ENCODE measurements at regions of chr13 and their contacts with region 1.

Region 1: GRCh38 chr13:110306960-110307746 is at the starts of genes COL4A1 and COL4A2:
- DNase-seq: no peak
- H3K4me3 ChIP-seq: peak within 1 kb of the TSS; percentile 93 to 97 (median 94)
- H3K27ac ChIP-seq: peak within 1 kb of the TSS; percentile 99
- H3K4me1 ChIP-seq: peaks cover 50 to 68% (median 63%) of the 10 kb centered on the region in 4 donors
- H3K27me3 ChIP-seq: peaks cover 0 to 5% (median 2%) of the 10 kb centered on the region in 4 donors
- CTCF ChIP-seq: no peak
- EP300 ChIP-seq: no peak
- POLR2A ChIP-seq: peak; percentile 86
- total RNA-seq, gene COL4A1: 328 to 578 (median 405) TPM
- total RNA-seq, gene COL4A2: 419 to 931 (median 555) TPM

Region 2: GRCh38 chr13:110232756-110233155 is 74.4 kb before region 1 on chr13:
- intact Hi-C with region 1: no loop called
- DNase-seq: peak; percentile 90
- H3K4me3 ChIP-seq: peak overlapping the region; percentile 13 to 35 (median 22)
- H3K27ac ChIP-seq: peak overlapping the region; percentile 61 to 77 (median 68)
- H3K4me1 ChIP-seq: peaks cover 62 to 86% (median 78%) of the 10 kb centered on the region in 4 donors
- H3K27me3 ChIP-seq: no peaks in the 10 kb centered on the region
- CTCF ChIP-seq: peak in 1 of 3 experiments; percentile 3
- EP300 ChIP-seq: no peak
- POLR2A ChIP-seq: no peak

Region 3: DNA sequence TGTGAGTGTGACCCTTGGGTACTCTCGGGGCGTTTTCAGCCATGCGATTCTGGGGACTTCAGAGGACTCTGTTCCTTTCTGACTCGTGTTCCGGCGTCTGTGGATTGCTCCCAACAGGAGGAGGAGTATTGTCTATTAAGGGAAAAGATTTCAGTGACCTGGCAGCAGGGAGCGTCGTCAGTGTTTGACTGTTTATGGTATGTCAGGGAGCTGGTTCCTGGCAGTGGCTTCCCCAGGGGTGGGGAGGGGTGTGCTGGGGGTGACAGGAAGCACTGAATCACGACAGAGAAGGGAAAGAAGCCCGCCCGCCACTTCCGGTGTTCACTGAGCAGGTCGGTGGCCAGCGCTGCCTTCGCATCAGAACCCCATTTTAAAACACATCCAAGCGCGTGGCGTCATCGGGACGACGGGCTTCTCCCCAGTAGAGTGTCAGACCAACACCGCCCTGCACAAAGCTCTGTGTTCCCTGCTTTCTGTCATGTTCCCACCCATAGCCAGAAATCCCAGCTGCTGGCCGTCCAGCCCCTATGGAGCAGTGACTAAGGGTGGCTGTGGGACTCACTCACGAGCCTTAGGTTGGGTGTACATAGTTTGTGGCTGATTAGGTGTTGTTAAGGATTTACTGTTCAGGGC is 33.8 kb after region 1 on chr13:
- intact Hi-C with region 1: loop called (anchors 5 kb)
- DNase-seq: peak; percentile 98
- H3K4me3 ChIP-seq: peak overlapping the region; percentile 30 to 40 (median 36)
- H3K27ac ChIP-seq: peak overlapping the region; percentile 91 to 98 (median 92)
- H3K4me1 ChIP-seq: peaks cover 70 to 100% (median 96%) of the 10 kb centered on the region in 4 donors
- H3K27me3 ChIP-seq: no peaks in the 10 kb centered on the region
- CTCF ChIP-seq: no peak
- EP300 ChIP-seq: peak; percentile 93
- POLR2A ChIP-seq: no peak

Region 4: GRCh38 chr13:110382229-110382628 is 75.1 kb after region 1 on chr13:
- intact Hi-C with region 1: no loop called
- DNase-seq: no peak
- H3K4me3 ChIP-seq: no peak overlapping the region
- H3K27ac ChIP-seq: peak overlapping the region; percentile 74 to 91 (median 76)
- H3K4me1 ChIP-seq: peaks cover 50 to 84% (median 70%) of the 10 kb centered on the region in 4 donors
- H3K27me3 ChIP-seq: no peaks in the 10 kb centered on the region
- CTCF ChIP-seq: no peak
- EP300 ChIP-seq: no peak
- POLR2A ChIP-seq: no peak

Region 5: GRCh38 chr13:110409581-110409992 is 102.4 kb after region 1 on chr13:
- intact Hi-C with region 1: no loop called
- DNase-seq: no peak
- H3K4me3 ChIP-seq: no peak overlapping the region
- H3K27ac ChIP-seq: peak overlapping the region; percentile 86 to 98 (median 92)
- H3K4me1 ChIP-seq: peaks cover 87 to 96% (median 95%) of the 10 kb centered on the region in 4 donors
- H3K27me3 ChIP-seq: no peaks in the 10 kb centered on the region
- CTCF ChIP-seq: no peak
- EP300 ChIP-seq: no peak
- POLR2A ChIP-seq: no peak

Region 6: GRCh38 chr13:110575322-110576069 is 268.3 kb after region 1 on chr13:
- intact Hi-C with region 1: no loop called
- DNase-seq: no peak
- H3K4me3 ChIP-seq: no peak overlapping the region
- H3K27ac ChIP-seq: no peak overlapping the region
- H3K4me1 ChIP-seq: peaks cover 0 to 5% (median 0%) of the 10 kb centered on the region in 4 donors
- H3K27me3 ChIP-seq: peaks cover 0 to 32% (median 2%) of the 10 kb centered on the region in 4 donors
- CTCF ChIP-seq: no peak
- EP300 ChIP-seq: no peak
- POLR2A ChIP-seq: no peak